Natural killer cell (primary cell): ENCODE measurements at regions of chr2 and their contacts with region 1.

Region 1: DNA sequence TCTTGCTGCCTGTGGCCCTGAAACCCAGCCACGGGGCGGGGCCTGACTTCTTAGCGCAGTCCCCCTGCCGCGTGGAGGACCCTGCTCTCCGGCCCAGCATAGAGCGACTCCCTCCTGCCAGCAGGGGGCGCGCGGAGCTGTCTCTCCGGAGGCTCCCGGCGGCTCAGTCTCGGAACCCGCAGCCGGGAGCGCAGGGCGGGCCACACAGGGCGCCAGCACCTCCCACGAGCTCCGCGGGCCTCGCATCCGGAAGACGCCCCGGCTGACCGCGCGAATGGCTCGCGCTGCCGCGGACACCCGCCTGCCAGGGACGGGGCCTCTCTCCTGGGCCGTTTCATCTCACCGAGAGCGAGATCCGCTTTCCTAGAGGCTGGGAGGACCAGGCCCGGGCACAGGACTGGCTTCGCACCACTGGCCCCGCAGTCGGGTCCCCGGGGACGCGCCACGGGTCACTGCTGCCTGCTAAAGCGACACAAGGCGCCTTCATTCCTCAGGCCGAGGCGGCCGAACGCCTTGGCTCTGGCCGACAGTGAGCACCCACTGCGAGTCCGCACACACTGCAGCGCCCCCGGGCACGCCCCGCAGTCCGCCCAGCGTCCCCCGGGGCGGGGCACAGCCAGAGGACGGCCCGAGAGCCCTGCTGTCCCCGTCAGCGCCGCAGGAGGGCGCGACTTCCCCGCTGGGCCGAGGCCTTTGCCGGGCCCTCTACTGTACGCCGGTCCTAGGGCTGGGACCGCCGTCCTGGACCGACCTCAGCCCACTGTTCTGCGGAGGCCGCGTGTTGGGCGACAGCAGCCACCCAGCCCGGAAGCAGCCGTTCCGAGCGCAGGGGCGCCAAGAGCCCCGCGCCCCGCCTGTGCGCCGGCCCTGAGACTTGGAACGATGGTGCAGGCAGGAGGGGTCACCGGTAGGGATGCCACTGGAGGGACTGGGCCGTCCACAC is 39.0 kb upstream of the ARHGEF4 start:
- DNase-seq: peak; percentile 87 to 94
- ATAC-seq: peak; percentile 81 to 93 (median 85)
- H3K4me3 ChIP-seq: peak overlapping the region; percentile 89
- H3K4me3 Mint-ChIP-seq: peak overlapping the region; percentile 81
- H3K27ac ChIP-seq: peak overlapping the region; percentile 94
- H3K27ac Mint-ChIP-seq: peak overlapping the region; percentile 84 to 95
- H3K4me1 ChIP-seq: peaks cover 47% of the 10 kb centered on the region
- H3K4me1 Mint-ChIP-seq: peaks cover 38 to 48% of the 10 kb centered on the region in 2 donors
- H3K27me3 ChIP-seq: no peaks in the 10 kb centered on the region
- H3K27me3 Mint-ChIP-seq: no peaks in the 10 kb centered on the region
- CTCF ChIP-seq: peak; percentile 78

Region 2: GRCh38 chr2:130727286-130728018 is 70.3 kb before region 1 on chr2:
- intact Hi-C with region 1: loop called (anchors 2 kb)
- DNase-seq: peak; percentile 92 to 94
- ATAC-seq: peak; percentile 91 to 96 (median 91)
- H3K4me3 ChIP-seq: peak overlapping the region; percentile 59
- H3K4me3 Mint-ChIP-seq: peak overlapping the region; percentile 80
- H3K27ac ChIP-seq: peak overlapping the region; percentile 90
- H3K27ac Mint-ChIP-seq: peak overlapping the region; percentile 83 to 93
- H3K4me1 ChIP-seq: peaks cover 30% of the 10 kb centered on the region
- H3K4me1 Mint-ChIP-seq: peaks cover 16 to 34% of the 10 kb centered on the region in 2 donors
- H3K27me3 ChIP-seq: no peaks in the 10 kb centered on the region
- H3K27me3 Mint-ChIP-seq: peaks cover 0 to under 1% of the 10 kb centered on the region in 2 donors
- CTCF ChIP-seq: no peak

Region 3: DNA sequence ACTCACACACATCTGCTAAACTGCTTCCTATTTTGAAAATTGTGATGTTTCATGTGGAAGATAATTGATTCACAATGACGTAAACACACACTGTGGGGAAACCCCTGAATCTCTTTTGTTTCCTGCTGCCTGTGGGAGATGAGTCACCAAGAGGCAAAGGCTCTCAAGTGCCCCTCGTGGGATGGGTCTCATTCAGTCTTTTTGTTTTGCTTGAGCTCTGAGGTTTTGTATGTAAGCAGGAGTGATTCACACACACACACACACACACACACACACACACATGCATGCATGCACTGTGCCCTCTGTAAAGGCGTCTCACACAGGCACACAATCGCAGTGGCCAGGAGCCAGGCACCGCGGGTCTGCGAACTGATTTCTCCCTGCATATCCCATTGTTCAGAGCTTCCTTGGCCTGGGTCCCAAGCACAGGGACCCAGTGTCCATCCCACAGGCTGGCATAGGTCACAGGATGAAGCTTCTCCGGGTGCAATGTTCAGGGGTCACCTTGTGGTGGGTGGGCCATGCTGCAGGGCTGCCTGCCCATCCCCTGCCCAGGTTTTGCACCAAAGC is 26.8 kb after region 1 on chr2:
- intact Hi-C with region 1: no loop called
- DNase-seq: peak; percentile 29 to 87
- ATAC-seq: peak; percentile 84 to 91 (median 90)
- H3K4me3 ChIP-seq: no peak overlapping the region
- H3K4me3 Mint-ChIP-seq: no peak overlapping the region
- H3K27ac ChIP-seq: no peak overlapping the region
- H3K27ac Mint-ChIP-seq: peak overlapping the region; percentile 66 to 92
- H3K4me1 ChIP-seq: peaks cover 17% of the 10 kb centered on the region
- H3K4me1 Mint-ChIP-seq: peaks cover 7 to 13% of the 10 kb centered on the region in 2 donors
- H3K27me3 ChIP-seq: no peaks in the 10 kb centered on the region
- H3K27me3 Mint-ChIP-seq: no peaks in the 10 kb centered on the region
- CTCF ChIP-seq: no peak

Region 4: GRCh38 chr2:130873700-130874346 is 76.1 kb after region 1 on chr2:
- intact Hi-C with region 1: loop called (anchors 1 kb)
- DNase-seq: peak; percentile 56 to 80
- ATAC-seq: peak in 2 of 3 donors; percentile 83 to 85
- H3K4me3 ChIP-seq: no peak overlapping the region
- H3K4me3 Mint-ChIP-seq: no peak overlapping the region
- H3K27ac ChIP-seq: no peak overlapping the region
- H3K27ac Mint-ChIP-seq: no peak overlapping the region
- H3K4me1 ChIP-seq: no peaks in the 10 kb centered on the region
- H3K4me1 Mint-ChIP-seq: peaks cover 8 to 13% of the 10 kb centered on the region in 2 donors
- H3K27me3 ChIP-seq: no peaks in the 10 kb centered on the region
- H3K27me3 Mint-ChIP-seq: peaks cover 14 to 41% of the 10 kb centered on the region in 2 donors
- CTCF ChIP-seq: peak; percentile 58

Region 5: GRCh38 chr2:130920415-130921163 is 122.8 kb after region 1 on chr2:
- intact Hi-C with region 1: loop called (anchors 1 kb)
- DNase-seq: peak; percentile 47 to 68
- ATAC-seq: peak in 2 of 3 donors; percentile 38 to 61
- H3K4me3 ChIP-seq: no peak overlapping the region
- H3K4me3 Mint-ChIP-seq: no peak overlapping the region
- H3K27ac ChIP-seq: no peak overlapping the region
- H3K27ac Mint-ChIP-seq: no peak overlapping the region
- H3K4me1 ChIP-seq: no peaks in the 10 kb centered on the region
- H3K4me1 Mint-ChIP-seq: no peaks in the 10 kb centered on the region
- H3K27me3 ChIP-seq: peaks cover 5% of the 10 kb centered on the region
- H3K27me3 Mint-ChIP-seq: peaks cover 9 to 19% of the 10 kb centered on the region in 2 donors
- CTCF ChIP-seq: peak; percentile 85

Region 6: DNA sequence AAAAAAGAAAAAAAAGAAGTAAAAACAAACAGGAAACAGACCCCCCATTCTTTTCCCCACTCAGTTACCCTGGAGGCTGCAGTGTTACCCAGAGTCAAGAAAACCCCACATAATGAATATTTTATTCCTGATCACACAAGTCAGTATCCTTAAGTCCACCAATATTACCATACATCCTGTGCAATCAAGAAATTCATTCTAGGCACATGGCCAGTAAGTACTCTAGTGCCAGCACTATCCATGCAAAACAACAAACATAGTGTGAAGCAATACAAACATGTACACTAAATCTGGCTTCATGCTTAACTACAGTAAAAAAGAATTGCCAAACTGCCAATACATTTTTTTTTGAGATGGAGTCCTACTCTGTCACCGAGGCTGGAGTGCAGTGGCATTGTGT is 183.9 kb after region 1 on chr2:
- intact Hi-C with region 1: no loop called
- DNase-seq: no peak
- ATAC-seq: no peak
- H3K4me3 ChIP-seq: no peak overlapping the region
- H3K4me3 Mint-ChIP-seq: no peak overlapping the region
- H3K27ac ChIP-seq: no peak overlapping the region
- H3K27ac Mint-ChIP-seq: no peak overlapping the region
- H3K4me1 ChIP-seq: no peaks in the 10 kb centered on the region
- H3K4me1 Mint-ChIP-seq: peaks cover 0 to 9% of the 10 kb centered on the region in 2 donors
- H3K27me3 ChIP-seq: no peaks in the 10 kb centered on the region
- H3K27me3 Mint-ChIP-seq: peaks cover 0 to 7% of the 10 kb centered on the region in 2 donors
- CTCF ChIP-seq: no peak

Region 7: DNA sequence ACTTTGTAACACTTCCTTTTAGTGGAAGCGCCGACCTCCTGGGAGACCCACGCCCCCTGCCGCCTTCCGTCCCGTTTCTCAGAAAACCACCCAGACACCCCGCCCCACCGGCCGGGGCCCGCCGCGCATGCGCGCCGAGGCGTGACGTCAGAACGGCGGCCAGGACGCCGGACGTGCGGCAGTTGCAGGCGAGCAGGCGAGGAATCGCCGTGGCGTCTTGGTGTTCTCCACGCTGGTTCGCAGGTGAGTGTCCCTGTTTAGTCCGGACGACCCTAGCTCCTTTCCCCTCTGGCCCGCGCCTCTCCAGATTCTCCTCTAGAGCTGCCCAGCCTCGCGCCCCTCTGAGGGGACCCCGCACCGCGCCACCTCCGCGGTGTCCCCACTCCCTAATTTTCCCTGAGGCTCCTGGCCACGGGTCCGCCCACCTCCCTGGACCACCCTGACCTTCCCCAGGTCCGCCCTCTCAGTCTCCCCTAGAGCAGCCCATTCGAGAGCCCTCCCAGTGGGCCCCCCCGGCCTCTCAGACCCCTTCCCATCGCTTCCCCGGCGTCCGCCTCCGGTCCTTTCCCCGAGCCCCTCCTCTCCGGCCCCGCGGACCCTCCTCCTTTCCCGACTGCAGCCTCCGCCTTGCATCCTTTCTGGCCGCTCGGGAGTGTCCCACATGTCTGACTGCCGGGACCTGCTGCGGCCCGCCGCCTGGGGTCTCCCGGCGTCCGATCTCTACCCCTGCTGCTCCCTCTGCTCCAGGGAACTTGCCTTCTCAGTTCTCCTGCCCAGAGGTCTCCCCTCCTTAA is 307.6 kb after region 1 on chr2 and contains the start of gene PLEKHB2:
- intact Hi-C with region 1: loop called (anchors 10 kb)
- DNase-seq: peak; percentile 96
- ATAC-seq: peak; percentile 73 to 89 (median 88)
- H3K4me3 ChIP-seq: peak within 1 kb of the TSS; percentile 100
- H3K4me3 Mint-ChIP-seq: peak within 1 kb of the TSS; percentile 94
- H3K27ac ChIP-seq: peak within 1 kb of the TSS; percentile 84
- H3K27ac Mint-ChIP-seq: peak within 1 kb of the TSS; percentile 89 to 96
- H3K4me1 ChIP-seq: peaks cover 26% of the 10 kb centered on the region
- H3K4me1 Mint-ChIP-seq: peaks cover 41 to 49% of the 10 kb centered on the region in 2 donors
- H3K27me3 ChIP-seq: no peaks in the 10 kb centered on the region
- H3K27me3 Mint-ChIP-seq: no peaks in the 10 kb centered on the region
- CTCF ChIP-seq: no peak
- total RNA-seq, gene PLEKHB2: 75.6 to 78.7 (median 77.4) TPM